ENCODE measurements at regions of chr3 and their contacts with region 1.

Region 1: GRCh38 chr3:71064288-71064955 is 519.1 kb downstream of the FOXP1 start:
- DNase-seq: no peak

Region 2: DNA sequence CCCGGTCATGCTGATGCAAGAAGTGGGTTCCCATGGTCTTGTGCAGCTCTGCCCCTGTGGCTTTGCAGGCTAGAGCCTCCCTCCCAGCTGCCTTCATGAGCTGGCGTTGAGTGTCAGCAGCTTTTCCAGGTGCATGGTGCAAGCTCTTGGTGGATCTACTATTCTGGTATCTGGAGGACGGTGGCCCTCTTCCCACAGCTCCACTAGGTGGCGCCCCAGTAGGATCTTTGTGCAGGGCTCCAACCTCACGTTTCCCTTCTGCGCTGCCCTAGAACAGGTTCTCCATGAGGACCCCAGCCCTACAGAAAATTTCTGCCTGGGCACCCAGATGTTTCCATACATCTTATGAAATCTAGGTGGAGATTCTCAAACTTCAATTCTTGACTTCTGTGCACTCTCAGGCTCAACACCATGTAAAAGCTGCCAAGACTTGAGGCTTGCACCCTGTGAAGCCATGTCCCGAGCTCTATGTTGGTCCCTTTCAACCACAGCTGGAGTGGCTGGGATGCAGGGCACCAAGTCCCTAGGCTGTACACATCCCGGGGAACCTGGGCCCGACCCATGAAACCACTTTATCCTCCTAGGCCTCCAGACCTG is 513.6 kb before region 1 on chr3:
- intact Hi-C with region 1: loop called (anchors 10 kb)
- DNase-seq: no peak

Region 3: DNA sequence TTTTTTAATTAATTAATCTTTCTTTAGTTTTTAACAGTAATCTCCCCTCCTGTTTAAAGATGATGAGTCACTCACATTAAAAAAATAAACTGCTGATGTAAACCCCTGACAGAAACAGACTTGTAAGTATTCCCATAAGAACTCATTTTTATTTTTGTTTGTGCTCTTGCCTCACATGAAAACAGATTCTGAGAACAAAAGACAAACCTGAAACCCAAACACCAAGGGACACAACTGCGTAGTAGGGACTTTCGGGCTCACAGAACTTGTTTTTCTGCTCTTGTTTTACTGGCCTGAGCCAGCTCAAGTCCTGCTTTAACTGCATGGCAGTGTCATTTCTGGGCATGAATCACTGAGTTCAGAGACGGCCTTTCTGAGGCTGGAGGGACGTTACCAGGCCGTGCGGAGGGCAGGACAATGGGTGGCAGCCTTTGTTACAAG is 81.7 kb before region 1 on chr3:
- intact Hi-C with region 1: loop called (anchors 5 kb)
- DNase-seq: no peak

Region 4: DNA sequence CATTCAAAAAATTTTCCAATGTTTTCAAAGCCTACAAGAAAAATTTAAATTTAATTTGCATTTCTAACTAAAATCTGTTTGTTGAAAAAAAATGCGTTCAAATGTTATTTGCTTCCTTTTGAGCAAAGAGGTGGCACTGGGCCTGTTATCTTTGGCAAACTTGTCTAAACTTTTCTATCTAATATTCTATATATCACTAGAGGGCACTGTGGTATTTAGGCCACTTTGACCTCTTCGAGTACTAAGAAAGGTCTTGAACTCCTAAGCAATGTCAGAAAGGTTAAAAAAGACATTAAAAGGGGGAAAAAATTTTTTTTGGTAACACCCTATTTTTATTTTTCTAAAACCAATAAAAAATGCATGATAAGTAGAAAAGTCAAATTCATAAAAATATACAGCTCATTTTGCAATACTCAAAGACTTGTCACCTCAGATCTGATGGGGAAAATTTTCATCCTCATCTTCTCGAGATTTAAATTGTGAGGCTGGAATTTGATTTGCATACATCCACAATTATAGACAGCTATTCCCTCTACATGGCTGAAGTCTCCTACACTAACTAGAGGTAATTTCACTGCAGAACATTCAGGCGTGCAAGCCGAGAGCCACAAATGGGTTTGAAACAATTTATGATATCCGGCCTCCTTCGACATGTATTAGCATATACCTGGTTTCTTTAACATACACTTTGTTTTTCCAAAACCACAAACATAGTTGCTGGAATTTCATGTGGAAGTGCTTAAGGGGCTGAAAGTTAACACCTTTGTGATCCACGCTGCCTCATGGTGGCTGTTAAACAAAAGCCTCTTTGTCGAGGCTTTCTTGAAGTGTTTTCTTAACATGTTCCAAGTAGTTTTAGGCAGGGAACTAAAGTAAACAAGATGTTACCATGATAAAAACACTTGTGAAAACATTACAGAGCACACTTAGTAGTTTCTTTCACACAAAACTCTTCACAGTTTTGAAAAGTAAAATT is 57.3 kb before region 1 on chr3:
- intact Hi-C with region 1: loop called (anchors 5 kb)
- DNase-seq: no peak

Region 5: DNA sequence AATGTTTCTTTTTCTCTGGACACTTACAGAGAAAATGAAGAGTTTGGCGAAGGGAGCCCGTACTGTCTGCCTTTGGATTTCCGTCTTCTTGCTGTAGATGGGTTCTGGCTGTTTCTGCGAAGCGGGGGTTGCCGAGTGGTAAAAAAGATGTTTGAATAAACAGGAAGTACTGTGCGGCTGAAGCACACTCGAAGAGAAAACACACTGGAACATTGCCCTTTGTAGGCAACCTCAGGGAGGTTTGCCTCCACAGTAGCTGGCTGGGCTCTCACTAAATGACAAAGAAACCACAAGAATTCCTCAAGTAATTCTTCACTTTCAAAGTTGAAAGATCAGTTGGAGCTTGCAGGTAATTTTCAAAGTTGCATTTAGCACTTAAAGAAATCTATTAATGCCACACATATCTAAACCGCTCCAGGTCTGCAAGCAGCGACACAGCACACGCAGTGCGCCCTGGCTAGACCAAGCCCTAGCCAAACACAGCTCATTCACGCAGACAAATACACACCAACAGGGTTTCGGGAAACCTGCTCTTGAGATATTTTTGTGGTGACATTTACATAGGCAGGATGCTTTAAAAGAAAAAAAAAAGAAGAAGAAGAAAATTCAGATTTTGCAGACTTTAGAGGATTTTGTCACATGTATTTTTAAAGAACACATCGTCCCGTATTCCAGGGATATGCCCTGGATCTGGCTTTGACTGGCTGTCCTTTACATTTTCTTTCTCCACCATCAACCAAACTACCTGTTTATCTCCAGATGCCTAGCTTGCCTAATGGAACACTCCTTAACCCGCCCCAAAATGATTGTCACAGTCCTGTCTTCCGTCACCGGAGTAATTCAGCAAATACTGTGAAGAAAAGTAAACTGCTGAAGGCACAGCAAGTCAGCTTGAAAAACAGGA is 66.3 kb after region 1 on chr3:
- intact Hi-C with region 1: loop called (anchors 2 kb)
- DNase-seq: peak; percentile 86

Region 6: GRCh38 chr3:71247221-71247976 is 183.0 kb after region 1 on chr3:
- intact Hi-C with region 1: loop called (anchors 5 kb)
- DNase-seq: no peak

Region 7: GRCh38 chr3:71288269-71288930 is 224.0 kb after region 1 on chr3:
- intact Hi-C with region 1: no loop called
- DNase-seq: no peak

Region 8: DNA sequence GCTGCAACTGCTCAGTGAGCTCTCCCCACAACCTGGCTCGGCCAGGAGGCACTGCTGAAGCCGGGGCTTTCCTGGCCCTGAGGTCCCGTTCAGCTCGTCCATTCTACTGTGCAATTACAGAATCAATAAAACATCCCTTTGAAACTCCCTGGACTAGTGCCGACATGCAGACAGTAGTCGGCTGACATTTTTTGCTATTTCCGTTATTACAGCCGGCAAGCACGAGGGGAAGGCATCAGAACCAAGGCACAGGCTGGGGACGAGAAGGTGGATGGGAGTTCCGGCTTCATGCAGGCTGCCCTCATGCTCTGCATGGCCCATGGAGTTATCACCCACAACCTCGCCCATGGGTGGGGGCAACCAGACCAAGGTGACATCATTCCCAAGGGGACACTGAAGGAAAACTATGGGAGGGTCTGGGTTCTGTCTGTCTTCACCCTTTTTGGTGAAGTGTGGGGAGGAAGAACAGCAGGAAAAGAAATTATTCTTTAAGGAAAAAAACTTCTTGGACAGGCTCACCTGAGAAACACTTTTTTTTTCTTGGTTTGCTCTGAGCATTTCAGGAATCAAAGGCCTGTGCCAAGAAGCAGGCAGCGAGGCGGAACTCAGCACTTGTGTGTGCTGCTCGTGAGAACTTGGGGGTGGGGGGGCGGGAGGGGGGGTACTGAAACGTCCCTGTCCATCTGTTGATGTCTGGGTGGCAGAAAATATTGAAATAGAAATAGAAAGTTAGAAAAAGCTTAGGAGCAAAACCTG is 364.6 kb after region 1 on chr3:
- intact Hi-C with region 1: loop called (anchors 5 kb)
- DNase-seq: no peak

Measured in cardiac septum (tissue), 1 donor.